Endothelial cell of umbilical vein (primary cell): ENCODE measurements at regions of chr16 and their contacts with region 1.

Region 1: GRCh38 chr16:83068686-83069085 is 441.9 kb downstream of the CDH13 start:
- DNase-seq: peak; percentile 91
- H3K4me3 ChIP-seq: no peak overlapping the region
- H3K27ac ChIP-seq: no peak overlapping the region
- H3K4me1 ChIP-seq: peaks cover 36% of the 10 kb centered on the region
- H3K27me3 ChIP-seq: no peaks in the 10 kb centered on the region
- CTCF ChIP-seq: peak; percentile 34 to 35
- POLR2A ChIP-seq: no peak

Region 2: GRCh38 chr16:81908466-81909227 is 1160.0 kb before region 1 on chr16:
- CTCF ChIA-PET with region 1: no interaction called
- POLR2A ChIA-PET with region 1: no interaction called
- dilution Hi-C with region 1: no loop called
- intact Hi-C with region 1: no loop called
- DNase-seq: no peak
- H3K4me3 ChIP-seq: no peak overlapping the region
- H3K27ac ChIP-seq: no peak overlapping the region
- H3K4me1 ChIP-seq: no peaks in the 10 kb centered on the region
- H3K27me3 ChIP-seq: no peaks in the 10 kb centered on the region
- CTCF ChIP-seq: no peak
- POLR2A ChIP-seq: no peak

Region 3: DNA sequence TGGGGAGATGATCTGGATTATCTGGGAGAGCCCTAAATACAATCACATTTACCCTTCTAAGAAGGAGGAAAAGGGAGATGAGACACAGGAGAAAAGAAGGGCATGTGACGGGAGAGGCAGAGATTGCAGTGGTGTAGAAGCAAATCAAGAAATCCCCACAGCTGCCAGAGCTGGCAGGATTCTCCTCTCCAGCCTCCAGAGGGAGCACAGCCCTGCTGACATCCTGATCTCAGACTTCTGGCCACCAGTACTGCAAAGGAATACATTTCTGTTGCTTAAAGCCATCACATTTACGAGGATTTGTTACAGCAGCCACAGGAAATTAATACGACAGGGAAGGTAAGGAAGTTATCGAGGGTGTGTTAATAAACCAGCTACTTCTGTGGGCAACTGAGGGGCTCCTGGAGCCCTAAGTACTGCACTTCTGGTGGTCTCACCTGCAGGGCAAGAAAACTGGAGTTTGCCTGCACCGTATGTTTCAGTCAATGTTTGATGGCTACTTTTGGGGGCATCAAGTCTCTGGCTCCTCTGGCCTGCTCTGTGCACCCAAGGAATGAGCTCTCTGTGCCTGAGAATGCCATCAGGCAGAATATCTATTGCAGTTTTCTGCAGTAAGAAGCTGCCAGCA is 464.8 kb before region 1 on chr16:
- CTCF ChIA-PET with region 1: no interaction called
- POLR2A ChIA-PET with region 1: no interaction called
- dilution Hi-C with region 1: no loop called
- intact Hi-C with region 1: loop called (anchors 1 kb)
- DNase-seq: peak; percentile 68
- H3K4me3 ChIP-seq: no peak overlapping the region
- H3K27ac ChIP-seq: no peak overlapping the region
- H3K4me1 ChIP-seq: no peaks in the 10 kb centered on the region
- H3K27me3 ChIP-seq: peaks cover 2 to 4% of the 10 kb centered on the region in 2 experiments
- CTCF ChIP-seq: peak; percentile 61 to 80
- POLR2A ChIP-seq: no peak

Region 4: DNA sequence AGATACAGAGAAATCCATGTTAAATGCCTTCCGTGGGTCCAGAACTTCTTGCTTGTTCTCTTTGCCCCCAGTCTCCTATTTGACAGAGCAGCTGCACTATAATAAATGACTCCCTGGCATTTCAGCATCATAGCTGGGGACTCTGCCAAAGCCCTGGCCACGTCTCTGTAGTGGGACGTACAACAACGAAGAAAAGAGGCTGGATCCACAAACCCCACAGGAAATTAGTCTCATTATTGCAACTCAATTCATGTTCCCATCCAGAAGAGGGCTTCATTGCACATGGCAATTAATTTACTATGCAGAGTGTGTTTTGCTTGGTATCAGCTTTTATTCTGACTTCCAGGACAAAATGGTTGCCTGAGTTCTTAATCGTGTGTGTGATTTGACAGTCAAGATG is 320.7 kb before region 1 on chr16:
- CTCF ChIA-PET with region 1: interaction called, 7 read pairs
- POLR2A ChIA-PET with region 1: no interaction called
- dilution Hi-C with region 1: no loop called
- intact Hi-C with region 1: loop called (anchors 1 kb)
- DNase-seq: peak; percentile 94
- H3K4me3 ChIP-seq: peak overlapping the region in 1 of 3 experiments; percentile 7
- H3K27ac ChIP-seq: peak overlapping the region; percentile 57
- H3K4me1 ChIP-seq: peaks cover 38% of the 10 kb centered on the region
- H3K27me3 ChIP-seq: no peaks in the 10 kb centered on the region
- CTCF ChIP-seq: peak; percentile 29 to 40
- POLR2A ChIP-seq: no peak

Region 5: DNA sequence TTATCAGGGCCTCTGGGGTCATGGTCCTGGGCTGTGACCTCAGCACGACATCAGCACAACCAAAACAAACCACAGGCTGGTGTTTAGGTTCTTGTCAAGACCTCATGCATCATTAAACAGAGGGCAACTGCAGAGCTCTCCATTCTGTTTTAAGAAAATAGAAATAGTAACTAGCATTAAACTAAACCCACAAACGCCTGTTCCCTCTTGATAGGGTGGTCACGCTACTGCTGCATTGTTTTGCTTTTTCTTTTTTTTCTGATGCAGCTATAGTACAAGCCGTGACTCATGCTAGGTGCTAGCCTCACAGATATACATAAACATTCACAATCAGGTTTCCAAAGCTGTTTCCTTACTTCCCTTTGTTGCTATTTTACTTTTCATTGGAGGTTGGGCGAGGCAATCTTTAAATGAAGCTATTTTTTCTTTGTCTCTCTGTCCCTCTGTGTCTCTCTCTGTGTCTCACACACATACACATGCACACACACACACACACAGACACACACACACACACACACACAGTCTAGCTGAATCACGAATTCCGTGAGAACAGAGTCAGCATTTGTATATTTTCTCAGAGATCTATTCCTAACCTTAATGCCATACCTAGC is 131.6 kb before region 1 on chr16:
- CTCF ChIA-PET with region 1: interaction called, 4 read pairs
- POLR2A ChIA-PET with region 1: no interaction called
- dilution Hi-C with region 1: no loop called
- intact Hi-C with region 1: loop called (anchors 1 kb)
- DNase-seq: peak; percentile 98
- H3K4me3 ChIP-seq: no peak overlapping the region
- H3K27ac ChIP-seq: peak overlapping the region; percentile 90
- H3K4me1 ChIP-seq: peaks cover 27% of the 10 kb centered on the region
- H3K27me3 ChIP-seq: no peaks in the 10 kb centered on the region
- CTCF ChIP-seq: no peak
- POLR2A ChIP-seq: peak; percentile 59

Region 6: DNA sequence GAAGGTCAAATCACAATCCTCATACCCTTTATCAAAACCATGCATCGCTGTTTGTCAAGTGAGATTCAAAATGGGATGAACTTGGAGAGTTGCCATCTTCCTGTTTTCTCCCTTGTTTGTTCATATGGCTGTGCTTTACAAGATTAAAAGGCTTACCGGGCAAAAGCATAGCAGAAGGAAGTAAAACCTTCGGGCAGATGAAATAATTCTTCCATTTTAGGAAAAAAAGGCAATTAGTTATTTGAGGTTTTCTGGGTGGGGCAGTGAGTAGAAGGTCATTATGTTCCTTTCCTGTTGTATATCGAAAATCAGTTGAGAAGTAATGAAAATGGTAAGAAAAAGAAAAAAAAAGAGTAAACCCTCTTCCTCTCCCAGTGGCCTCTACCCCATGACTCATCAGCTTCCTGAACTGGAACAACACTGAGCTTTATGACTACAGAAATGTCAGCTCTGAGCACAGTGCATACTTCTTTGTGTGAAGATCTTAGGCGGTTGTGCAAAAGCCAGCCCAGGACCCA is 72.7 kb before region 1 on chr16:
- CTCF ChIA-PET with region 1: interaction called, 4 read pairs
- POLR2A ChIA-PET with region 1: no interaction called
- dilution Hi-C with region 1: no loop called
- intact Hi-C with region 1: loop called (anchors 1 kb)
- DNase-seq: peak; percentile 96
- H3K4me3 ChIP-seq: peak overlapping the region in 1 of 3 experiments; percentile 31
- H3K27ac ChIP-seq: peak overlapping the region; percentile 91
- H3K4me1 ChIP-seq: peaks cover 23% of the 10 kb centered on the region
- H3K27me3 ChIP-seq: no peaks in the 10 kb centered on the region
- CTCF ChIP-seq: no peak
- POLR2A ChIP-seq: no peak

Region 7: GRCh38 chr16:83031524-83031923 is 37.2 kb before region 1 on chr16:
- CTCF ChIA-PET with region 1: no interaction called
- POLR2A ChIA-PET with region 1: no interaction called
- dilution Hi-C with region 1: no loop called
- intact Hi-C with region 1: no loop called
- DNase-seq: no peak
- H3K4me3 ChIP-seq: no peak overlapping the region
- H3K27ac ChIP-seq: no peak overlapping the region
- H3K4me1 ChIP-seq: peaks cover 5% of the 10 kb centered on the region
- H3K27me3 ChIP-seq: no peaks in the 10 kb centered on the region
- CTCF ChIP-seq: no peak
- POLR2A ChIP-seq: no peak

Region 8: GRCh38 chr16:83116274-83116892 is 47.7 kb after region 1 on chr16:
- CTCF ChIA-PET with region 1: no interaction called
- POLR2A ChIA-PET with region 1: no interaction called
- dilution Hi-C with region 1: no loop called
- intact Hi-C with region 1: no loop called
- DNase-seq: no peak
- H3K4me3 ChIP-seq: no peak overlapping the region
- H3K27ac ChIP-seq: no peak overlapping the region
- H3K4me1 ChIP-seq: no peaks in the 10 kb centered on the region
- H3K27me3 ChIP-seq: no peaks in the 10 kb centered on the region
- CTCF ChIP-seq: no peak
- POLR2A ChIP-seq: no peak